Right ventricle myocardium inferior (tissue), 1 donor: ENCODE measurements at regions of chr12 and their contacts with region 1.

Region 1: DNA sequence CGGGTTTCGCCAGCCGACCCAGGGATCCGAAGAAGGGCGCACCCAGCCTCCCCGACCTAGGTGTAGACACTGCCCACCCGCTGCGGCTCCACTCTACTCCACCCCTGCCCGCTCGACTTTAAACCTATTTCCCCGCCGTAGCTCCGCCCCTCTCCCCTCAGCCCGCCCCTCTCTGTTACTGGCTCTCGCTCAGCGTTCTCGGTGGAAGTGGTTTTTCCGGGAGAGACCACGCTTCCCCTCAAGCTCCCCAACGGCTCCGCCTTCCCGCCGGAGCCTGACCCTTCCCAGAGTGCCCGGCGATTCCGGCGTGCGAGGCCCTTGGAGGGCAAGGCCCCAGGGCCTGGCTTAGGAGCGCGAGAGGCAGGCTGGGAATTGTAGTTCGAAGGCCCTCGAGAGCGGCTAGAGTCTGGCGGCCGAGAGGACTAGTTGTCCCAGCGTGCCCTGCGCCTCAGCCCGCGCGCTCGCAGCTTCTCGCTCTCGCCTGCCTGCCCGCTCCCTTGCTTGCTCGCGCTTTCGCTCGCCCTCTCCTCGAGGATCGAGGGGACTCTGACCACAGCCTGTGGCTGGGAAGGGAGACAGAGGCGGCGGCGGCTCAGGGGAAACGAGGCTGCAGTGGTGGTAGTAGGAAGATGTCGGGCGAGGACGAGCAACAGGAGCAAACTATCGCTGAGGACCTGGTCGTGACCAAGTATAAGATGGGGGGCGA is at the start of gene PA2G4:
- DNase-seq: peak; percentile 99
- ATAC-seq: peak; percentile 99
- total RNA-seq, gene PA2G4: 69.7 TPM

Region 2: DNA sequence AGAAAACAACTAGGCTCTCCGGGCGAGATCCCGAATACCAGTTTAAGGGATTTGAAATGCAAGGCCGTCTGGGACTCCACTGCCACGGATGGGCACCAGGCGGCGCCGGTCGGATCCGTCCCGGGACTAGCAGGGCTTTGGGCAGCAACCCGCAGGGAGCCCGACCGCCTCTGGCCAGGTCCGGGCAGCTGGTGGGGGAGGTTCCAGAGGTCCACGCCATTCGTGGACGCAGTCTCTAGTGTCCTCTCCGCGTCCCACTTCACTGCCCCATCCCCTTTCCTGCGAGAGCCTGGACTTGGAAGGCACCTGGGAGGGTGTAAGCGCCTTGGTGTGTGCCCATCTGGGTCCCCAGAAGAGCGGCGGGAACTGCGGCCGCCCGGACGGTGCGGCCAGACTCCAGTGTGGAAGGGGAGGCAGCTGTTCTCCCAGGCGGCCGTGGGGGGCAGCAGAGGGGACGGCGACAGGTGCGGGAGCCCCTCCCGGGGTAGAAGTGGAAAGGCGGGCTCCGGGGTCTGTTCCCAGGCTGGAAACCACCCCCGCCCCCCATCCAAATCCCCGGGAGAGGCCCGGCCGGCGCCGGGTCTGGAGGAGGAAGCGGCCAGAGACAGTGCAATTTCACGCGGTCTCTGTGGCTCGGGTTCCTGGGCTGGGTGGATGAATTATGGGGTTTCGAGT is 25.1 kb before region 1 on chr12:
- intact Hi-C with region 1: loop called (anchors 1 kb)
- DNase-seq: peak; percentile 89
- ATAC-seq: peak; percentile 87